ENCODE measurements at regions of chr1 and their contacts with region 1.

Region 1: GRCh38 chr1:205591522-205592351 is 40.1 kb downstream of the ELK4 start:
- DNase-seq: peak; percentile 88 to 92 (median 92)
- ATAC-seq: peak; percentile 93
- H3K4me3 ChIP-seq: peak overlapping the region; percentile 21; the same call in 1 of the 2 replicates
- H3K27ac ChIP-seq: no peak overlapping the region; the same call in 2 of the 3 replicates
- H3K4me1 ChIP-seq: peaks cover 3 to 6% of the 10 kb centered on the region in 2 experiments; a peak in 4 of 5 replicates
- H3K27me3 ChIP-seq: no peaks in the 10 kb centered on the region
- CTCF ChIP-seq: peak; percentile 99
- EP300 ChIP-seq: no peak
- POLR2A ChIP-seq: no peak
- RAD21 ChIP-seq: peak; percentile 99 to 100

Region 2: GRCh38 chr1:205528887-205529825 is 62.6 kb before region 1 on chr1:
- CTCF ChIA-PET with region 1: interaction called, 7 read pairs
- POLR2A ChIA-PET with region 1: no interaction called
- in situ Hi-C with region 1: no loop called
- intact Hi-C with region 1: loop called (anchors 2 kb)
- DNase-seq: peak; percentile 87 to 96 (median 94)
- ATAC-seq: peak; percentile 95
- H3K4me3 ChIP-seq: peak overlapping the region; percentile 32
- H3K27ac ChIP-seq: no peak overlapping the region
- H3K4me1 ChIP-seq: peaks cover 0 to 37% of the 10 kb centered on the region in 2 experiments; a peak in 3 of 5 replicates
- H3K27me3 ChIP-seq: peaks cover 37 to 86% of the 10 kb centered on the region in 2 experiments; a peak in 4 of 5 replicates
- CTCF ChIP-seq: peak; percentile 92 to 95 (median 94)
- EP300 ChIP-seq: no peak
- POLR2A ChIP-seq: no peak
- RAD21 ChIP-seq: peak; percentile 81 to 95

Region 3: GRCh38 chr1:205568469-205569361 is 23.0 kb before region 1 on chr1:
- CTCF ChIA-PET with region 1: no interaction called
- POLR2A ChIA-PET with region 1: interaction called, 11 read pairs
- in situ Hi-C with region 1: no loop called
- intact Hi-C with region 1: no loop called
- DNase-seq: peak in 2 of 4 experiments; percentile 63 to 65
- ATAC-seq: no peak
- H3K4me3 ChIP-seq: no peak overlapping the region
- H3K27ac ChIP-seq: no peak overlapping the region
- H3K4me1 ChIP-seq: peaks cover 0 to 7% of the 10 kb centered on the region in 2 experiments; a peak in 2 of 5 replicates
- H3K27me3 ChIP-seq: peaks cover 36 to 55% of the 10 kb centered on the region in 2 experiments
- CTCF ChIP-seq: no peak
- EP300 ChIP-seq: no peak
- POLR2A ChIP-seq: no peak
- RAD21 ChIP-seq: no peak

Region 4: DNA sequence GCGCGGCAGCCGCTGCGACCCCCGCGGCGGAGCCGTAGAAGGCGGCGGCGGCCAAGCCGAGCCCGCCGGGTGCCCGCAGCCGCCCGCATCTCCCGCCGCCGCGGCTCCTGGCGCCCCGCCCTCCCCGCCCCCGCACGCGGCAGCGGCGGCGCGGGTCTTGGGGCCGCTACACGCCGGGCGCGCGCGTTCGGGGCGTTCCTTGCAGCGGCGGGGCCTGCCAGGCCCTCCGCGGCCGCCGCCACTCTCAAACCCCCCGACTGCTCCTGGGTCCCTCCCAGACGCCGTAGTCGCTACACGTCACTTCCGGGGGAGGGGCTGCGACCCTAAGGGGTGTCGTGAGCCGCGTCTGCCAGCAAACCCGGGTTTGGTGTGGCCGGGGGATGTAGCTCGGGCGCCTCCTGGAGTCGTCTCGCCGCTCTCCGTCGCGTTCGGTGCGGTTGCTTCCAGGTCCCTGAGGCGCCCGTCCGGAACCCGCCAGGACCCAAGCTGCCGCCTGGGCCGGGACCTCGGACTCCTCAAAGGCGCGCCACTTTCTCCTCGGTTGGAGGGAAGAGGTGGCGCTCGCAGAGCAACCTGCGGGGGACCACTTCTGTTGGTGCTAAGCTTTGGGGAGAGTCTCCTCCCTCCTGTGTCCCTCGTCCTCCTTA is 40.1 kb after region 1 on chr1 and contains the start of gene ELK4:
- CTCF ChIA-PET with region 1: interaction called, 44 read pairs
- POLR2A ChIA-PET with region 1: interaction called, 15 read pairs
- in situ Hi-C with region 1: no loop called
- intact Hi-C with region 1: loop called (anchors 1 kb)
- DNase-seq: peak; percentile 99 to 100 (median 99)
- ATAC-seq: peak; percentile 90
- H3K4me3 ChIP-seq: peak within 1 kb of the TSS; percentile 62
- H3K27ac ChIP-seq: peak within 1 kb of the TSS; percentile 93
- H3K4me1 ChIP-seq: peaks cover 15% of the 10 kb centered on the region in 2 experiments
- H3K27me3 ChIP-seq: no peaks in the 10 kb centered on the region
- CTCF ChIP-seq: peak; percentile 80 to 94 (median 91)
- EP300 ChIP-seq: peak; percentile 51
- POLR2A ChIP-seq: peak; percentile 93
- RAD21 ChIP-seq: peak; percentile 88 to 90
- polyA plus RNA-seq, gene ELK4: 2.0 to 3.1 TPM

Region 5: DNA sequence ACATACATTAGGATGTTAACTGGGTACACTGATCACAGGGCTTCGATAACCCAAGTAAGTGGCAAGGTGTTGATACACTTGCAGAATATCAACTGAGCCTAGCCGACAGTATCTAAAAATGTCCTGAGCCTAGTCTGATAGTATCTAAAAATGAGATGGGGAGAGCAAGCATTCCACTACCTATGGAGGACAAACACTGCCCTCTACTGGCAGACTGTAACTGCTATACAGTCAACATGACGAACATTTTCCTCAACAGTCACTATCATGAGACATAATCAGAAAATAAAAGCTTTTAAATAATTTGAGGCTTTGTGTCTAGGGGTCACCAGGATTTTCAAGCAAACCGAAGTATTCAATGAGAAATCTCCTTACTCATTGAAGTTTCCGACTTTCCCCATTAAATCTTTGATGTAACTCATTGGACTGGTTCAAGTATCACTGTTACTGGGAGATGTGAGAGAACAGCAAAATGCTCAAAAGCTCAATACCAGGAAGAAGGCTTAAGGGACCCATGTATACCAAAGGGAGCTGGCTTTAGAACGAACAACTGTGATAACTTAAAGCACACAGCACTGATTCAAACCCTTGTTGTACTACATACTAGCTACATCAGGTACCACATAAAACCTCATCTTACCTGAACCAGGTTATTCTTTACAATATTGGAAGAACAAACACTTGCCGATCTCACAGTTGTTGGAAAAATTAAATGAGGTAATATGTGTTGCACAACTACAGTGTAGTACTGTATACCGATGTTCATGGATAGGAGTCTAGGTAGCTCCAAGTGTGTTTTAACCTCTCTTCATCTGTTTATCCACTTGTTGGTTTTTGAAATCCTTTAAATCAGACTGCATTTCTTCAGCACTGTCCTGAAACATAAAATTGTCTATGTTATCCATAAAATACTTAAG is 119.6 kb after region 1 on chr1:
- CTCF ChIA-PET with region 1: interaction called, 8 read pairs
- POLR2A ChIA-PET with region 1: interaction called, 4 read pairs
- in situ Hi-C with region 1: loop called (anchors 5 kb)
- intact Hi-C with region 1: loop called (anchors 1 kb)
- DNase-seq: peak; percentile 79 to 91 (median 85)
- ATAC-seq: peak; percentile 93
- H3K4me3 ChIP-seq: no peak overlapping the region
- H3K27ac ChIP-seq: no peak overlapping the region
- H3K4me1 ChIP-seq: peaks cover 0 to 18% of the 10 kb centered on the region in 2 experiments; a peak in 3 of 5 replicates
- H3K27me3 ChIP-seq: no peaks in the 10 kb centered on the region
- CTCF ChIP-seq: peak; percentile 87 to 98 (median 95)
- EP300 ChIP-seq: 0 out of 2 replicates have a peak, but pooled peaks have one; percentile 13
- POLR2A ChIP-seq: no peak
- RAD21 ChIP-seq: peak; percentile 99

Region 6: DNA sequence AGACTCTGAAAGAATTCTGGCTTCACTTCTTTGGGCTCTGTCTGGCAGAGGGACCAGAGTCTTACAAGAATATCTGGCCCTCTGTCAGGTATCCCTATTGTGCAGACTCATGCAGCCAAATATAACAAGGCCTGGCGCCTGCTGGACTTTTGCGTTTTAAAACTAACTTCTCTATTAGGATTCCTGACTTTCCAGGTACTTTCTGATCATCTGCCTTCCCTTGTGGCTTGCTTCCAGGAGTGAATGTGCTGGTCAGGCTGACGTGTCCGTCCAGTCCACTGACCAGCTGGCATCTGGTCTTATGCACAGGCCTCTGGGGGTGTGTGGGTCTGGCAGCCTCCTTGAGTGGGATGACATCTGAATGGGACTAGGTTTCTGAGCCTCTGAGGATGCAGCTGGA is 192.2 kb after region 1 on chr1:
- CTCF ChIA-PET with region 1: interaction called, 3 read pairs
- POLR2A ChIA-PET with region 1: no interaction called
- in situ Hi-C with region 1: no loop called
- intact Hi-C with region 1: loop called (anchors 10 kb)
- DNase-seq: no peak
- ATAC-seq: peak; percentile 9; the same call in 1 of the 3 replicates
- H3K4me3 ChIP-seq: no peak overlapping the region
- H3K27ac ChIP-seq: no peak overlapping the region
- H3K4me1 ChIP-seq: peaks cover 7 to 20% of the 10 kb centered on the region in 2 experiments; a peak in 4 of 5 replicates
- H3K27me3 ChIP-seq: no peaks in the 10 kb centered on the region; a peak in 1 of 5 replicates
- CTCF ChIP-seq: no peak
- EP300 ChIP-seq: no peak
- POLR2A ChIP-seq: no peak
- RAD21 ChIP-seq: no peak

Region 7: DNA sequence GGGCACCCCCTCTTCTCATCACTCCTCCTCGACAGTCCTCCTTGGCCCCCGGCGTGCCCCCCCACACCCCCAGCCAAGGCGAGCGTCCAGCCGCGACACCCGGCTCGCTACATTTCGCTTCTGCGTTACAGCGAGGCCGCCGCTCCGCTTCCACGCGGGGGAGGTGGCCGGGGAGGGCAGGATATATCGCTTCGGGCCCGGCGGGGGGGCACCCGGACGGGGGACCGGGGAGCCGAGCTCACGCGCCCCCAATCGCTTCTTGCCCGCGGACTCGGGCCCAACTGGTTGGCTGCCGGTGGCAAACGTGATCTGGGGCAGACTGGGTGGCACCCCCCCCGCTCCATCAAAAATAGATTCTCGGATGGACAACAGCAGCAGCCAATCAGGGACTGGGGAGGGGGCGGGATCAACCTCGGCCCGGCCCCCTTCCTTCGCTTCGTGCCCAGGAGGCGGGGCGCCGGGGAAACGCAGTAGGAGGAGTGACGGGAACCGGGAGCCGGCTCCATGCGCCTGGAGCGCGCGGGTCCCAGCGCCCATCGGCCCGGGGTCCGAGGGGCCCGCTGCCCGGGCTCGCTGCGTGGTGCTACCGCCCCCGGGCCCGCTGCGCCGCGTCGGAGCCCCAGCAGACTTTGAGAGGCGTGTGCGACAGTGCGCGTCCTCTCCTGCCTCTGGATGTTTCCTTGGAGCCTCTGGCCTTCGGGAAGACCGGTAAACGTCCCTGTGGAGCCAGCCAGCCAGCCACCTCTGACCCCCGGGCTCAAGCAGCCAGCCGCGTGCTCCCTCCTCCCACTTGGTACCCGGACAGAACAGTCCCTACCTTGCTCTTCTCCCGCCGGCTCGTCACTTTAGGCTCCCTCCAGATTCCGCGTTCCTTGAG is 221.4 kb after region 1 on chr1 and contains the start of gene SLC41A1:
- CTCF ChIA-PET with region 1: no interaction called
- POLR2A ChIA-PET with region 1: no interaction called
- in situ Hi-C with region 1: no loop called
- intact Hi-C with region 1: no loop called
- DNase-seq: peak; percentile 95 to 100 (median 100)
- ATAC-seq: peak; percentile 95
- H3K4me3 ChIP-seq: peak within 1 kb of the TSS; percentile 85
- H3K27ac ChIP-seq: peak within 1 kb of the TSS; percentile 60
- H3K4me1 ChIP-seq: peaks cover 32 to 41% of the 10 kb centered on the region in 2 experiments; a peak in 4 of 5 replicates
- H3K27me3 ChIP-seq: no peaks in the 10 kb centered on the region
- CTCF ChIP-seq: no peak
- EP300 ChIP-seq: no peak
- POLR2A ChIP-seq: peak; percentile 68
- RAD21 ChIP-seq: no peak
- polyA plus RNA-seq, gene SLC41A1: 4.1 to 5.5 TPM

Region 8: GRCh38 chr1:205939690-205940330 is 348.1 kb after region 1 on chr1:
- CTCF ChIA-PET with region 1: no interaction called
- POLR2A ChIA-PET with region 1: no interaction called
- in situ Hi-C with region 1: no loop called
- intact Hi-C with region 1: no loop called
- DNase-seq: peak in 3 of 4 experiments; percentile 53 to 72 (median 71)
- ATAC-seq: peak; percentile 76
- H3K4me3 ChIP-seq: no peak overlapping the region
- H3K27ac ChIP-seq: no peak overlapping the region
- H3K4me1 ChIP-seq: peaks cover 2 to 7% of the 10 kb centered on the region in 2 experiments
- H3K27me3 ChIP-seq: peaks cover 36 to 80% of the 10 kb centered on the region in 2 experiments
- CTCF ChIP-seq: peak; percentile 19 to 41 (median 27); a peak in 3 of 6 replicates
- EP300 ChIP-seq: no peak
- POLR2A ChIP-seq: no peak
- RAD21 ChIP-seq: no peak

Region 9: DNA sequence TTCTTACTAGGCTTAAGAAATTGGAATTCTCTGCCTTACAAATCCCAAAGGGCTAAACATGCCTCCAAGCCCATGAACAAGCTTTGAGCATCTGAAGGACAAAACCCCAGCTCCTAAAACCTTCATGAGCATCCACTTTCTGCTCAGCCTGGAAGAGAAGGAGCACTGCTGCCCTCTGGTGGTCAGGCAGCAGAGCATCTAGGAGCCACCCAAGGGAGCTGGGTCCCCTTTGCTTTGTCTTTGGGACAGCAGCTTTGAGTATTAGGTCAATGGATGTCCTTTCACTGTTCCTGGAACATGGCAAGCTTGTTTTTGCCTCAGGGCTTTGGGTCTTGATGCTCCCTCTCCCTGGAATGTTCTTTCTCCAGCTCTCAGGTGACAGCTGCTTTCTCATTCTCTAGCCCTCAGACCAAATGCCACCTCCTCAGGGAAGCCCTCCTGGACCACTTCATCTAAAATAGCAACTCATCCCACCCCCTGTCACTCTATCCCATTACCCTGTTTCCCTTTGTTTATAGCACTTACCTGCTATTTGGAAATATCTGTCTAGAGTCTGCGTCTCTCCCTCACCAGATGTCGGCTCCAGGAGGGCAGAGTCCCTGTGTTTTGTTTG is 385.8 kb after region 1 on chr1:
- CTCF ChIA-PET with region 1: no interaction called
- POLR2A ChIA-PET with region 1: no interaction called
- in situ Hi-C with region 1: no loop called
- intact Hi-C with region 1: loop called (anchors 5 kb)
- DNase-seq: peak; percentile 79 to 92 (median 88)
- ATAC-seq: peak; percentile 97
- H3K4me3 ChIP-seq: no peak overlapping the region
- H3K27ac ChIP-seq: no peak overlapping the region
- H3K4me1 ChIP-seq: peaks cover 0 to 4% of the 10 kb centered on the region in 2 experiments; a peak in 1 of 5 replicates
- H3K27me3 ChIP-seq: peaks cover 22 to 41% of the 10 kb centered on the region in 2 experiments
- CTCF ChIP-seq: peak; percentile 96 to 98 (median 98)
- EP300 ChIP-seq: no peak
- POLR2A ChIP-seq: no peak
- RAD21 ChIP-seq: peak; percentile 99 to 100